ENCODE measurements at regions of chr6 and their contacts with region 1.

Region 1: GRCh38 chr6:43506667-43507471 is 3.3 kb downstream of the LRRC73 start:
- DNase-seq: peak; percentile 89
- H3K4me3 ChIP-seq: no peak overlapping the region; a peak in 1 of 4 replicates
- H3K27ac ChIP-seq: no peak overlapping the region; a peak in 1 of 4 replicates
- H3K4me1 ChIP-seq: peaks cover 0 to 26% of the 10 kb centered on the region in 2 experiments; a peak in 1 of 4 replicates
- H3K27me3 ChIP-seq: no peaks in the 10 kb centered on the region
- CTCF ChIP-seq: peak; percentile 91
- EP300 ChIP-seq: 0 out of 4 replicates have a peak, but pooled peaks of 1 of the 2 experiments have one; percentile 16
- RAD21 ChIP-seq: peak; percentile 94

Region 2: DNA sequence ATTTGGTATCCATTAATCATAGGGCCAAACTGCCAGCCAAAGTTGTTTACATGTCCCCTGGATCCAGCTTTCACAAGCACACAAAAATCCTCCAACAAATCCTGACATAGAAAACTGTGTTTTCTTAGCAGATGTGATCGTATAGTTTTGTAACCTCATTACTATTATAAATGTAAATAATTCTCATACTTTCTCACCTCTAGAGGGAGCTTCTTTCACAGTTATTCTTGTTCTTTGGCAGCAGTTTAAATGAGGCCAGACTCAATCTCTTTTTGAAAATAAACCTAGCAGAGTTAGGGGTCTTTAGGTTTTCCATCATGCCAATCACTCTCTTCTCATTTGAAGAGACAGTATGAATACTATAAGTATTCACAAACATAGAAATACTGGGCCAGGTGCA is 120.4 kb before region 1 on chr6:
- CTCF ChIA-PET with region 1: interaction called, 25 read pairs
- POLR2A ChIA-PET with region 1: no interaction called
- DNase-seq: peak; percentile 52
- H3K4me3 ChIP-seq: no peak overlapping the region
- H3K27ac ChIP-seq: no peak overlapping the region
- H3K4me1 ChIP-seq: peaks cover 0 to 2% of the 10 kb centered on the region in 2 experiments; a peak in 1 of 4 replicates
- H3K27me3 ChIP-seq: no peaks in the 10 kb centered on the region; the same call in 1 of the 2 replicates
- CTCF ChIP-seq: peak; percentile 76
- EP300 ChIP-seq: no peak
- RAD21 ChIP-seq: peak; percentile 77

Region 3: GRCh38 chr6:43421831-43422230 is 85.0 kb before region 1 on chr6:
- CTCF ChIA-PET with region 1: no interaction called
- POLR2A ChIA-PET with region 1: no interaction called
- DNase-seq: no peak
- H3K4me3 ChIP-seq: no peak overlapping the region
- H3K27ac ChIP-seq: no peak overlapping the region
- H3K4me1 ChIP-seq: no peaks in the 10 kb centered on the region
- H3K27me3 ChIP-seq: no peaks in the 10 kb centered on the region; the same call in 1 of the 2 replicates
- CTCF ChIP-seq: no peak
- EP300 ChIP-seq: no peak
- RAD21 ChIP-seq: no peak

Region 4: GRCh38 chr6:43444036-43444435 is 62.8 kb before region 1 on chr6:
- CTCF ChIA-PET with region 1: interaction called, 35 read pairs
- POLR2A ChIA-PET with region 1: interaction called, 3 read pairs
- DNase-seq: no peak
- H3K4me3 ChIP-seq: no peak overlapping the region
- H3K27ac ChIP-seq: no peak overlapping the region; a peak in 1 of 4 replicates
- H3K4me1 ChIP-seq: no peaks in the 10 kb centered on the region
- H3K27me3 ChIP-seq: no peaks in the 10 kb centered on the region
- CTCF ChIP-seq: no peak
- EP300 ChIP-seq: no peak
- RAD21 ChIP-seq: no peak

Region 5: DNA sequence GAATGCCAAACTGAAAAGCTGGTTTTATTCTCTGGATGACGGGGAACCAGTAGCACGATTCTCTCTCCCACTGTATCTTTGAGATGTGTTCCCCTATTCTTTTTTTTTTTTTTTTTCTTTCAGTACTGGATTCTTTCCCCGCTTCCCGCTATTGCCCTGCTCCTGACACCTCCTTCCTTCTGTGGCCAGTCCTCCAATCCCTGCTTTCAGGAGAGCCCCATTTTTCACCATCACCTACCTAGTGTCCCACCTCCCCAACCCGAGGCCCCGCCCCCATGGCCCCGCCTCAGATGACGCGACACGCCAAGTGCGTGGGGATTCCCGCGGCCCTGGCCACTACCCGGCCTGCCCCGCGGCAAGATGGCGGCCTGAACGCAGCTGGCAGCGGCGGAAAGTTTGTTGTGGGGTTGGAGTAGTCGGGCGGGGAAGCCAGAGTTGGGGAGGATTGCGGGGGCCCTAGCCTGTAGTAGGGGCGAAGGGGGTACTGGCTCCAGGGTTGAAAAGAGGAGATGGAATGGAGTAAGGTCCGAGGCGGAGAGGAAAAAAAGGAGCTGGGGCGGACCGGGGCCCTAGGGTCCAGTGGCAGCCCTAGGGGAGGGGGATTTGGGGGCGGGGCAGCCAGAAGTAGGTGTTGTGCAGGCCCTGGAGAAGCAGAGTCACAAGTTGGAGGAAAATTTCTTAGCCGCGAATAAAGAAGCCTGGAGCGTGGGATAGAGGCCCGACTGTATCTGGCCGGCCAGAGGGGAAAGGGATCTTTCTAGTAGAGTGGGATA is 29.4 kb before region 1 on chr6 and contains the start of gene TJAP1:
- CTCF ChIA-PET with region 1: interaction called, 23 read pairs
- POLR2A ChIA-PET with region 1: interaction called, 3 read pairs
- DNase-seq: peak; percentile 96
- H3K4me3 ChIP-seq: peak within 1 kb of the TSS; percentile 60 to 65
- H3K27ac ChIP-seq: peak within 1 kb of the TSS; percentile 40 to 65; a peak in 3 of 4 replicates
- H3K4me1 ChIP-seq: peaks cover 10 to 15% of the 10 kb centered on the region in 2 experiments; a peak in 3 of 4 replicates
- H3K27me3 ChIP-seq: no peaks in the 10 kb centered on the region
- CTCF ChIP-seq: no peak
- EP300 ChIP-seq: no peak
- RAD21 ChIP-seq: no peak
- polyA plus RNA-seq, gene TJAP1: 30.7 and 39.5 TPM in 2 replicates

Region 6: DNA sequence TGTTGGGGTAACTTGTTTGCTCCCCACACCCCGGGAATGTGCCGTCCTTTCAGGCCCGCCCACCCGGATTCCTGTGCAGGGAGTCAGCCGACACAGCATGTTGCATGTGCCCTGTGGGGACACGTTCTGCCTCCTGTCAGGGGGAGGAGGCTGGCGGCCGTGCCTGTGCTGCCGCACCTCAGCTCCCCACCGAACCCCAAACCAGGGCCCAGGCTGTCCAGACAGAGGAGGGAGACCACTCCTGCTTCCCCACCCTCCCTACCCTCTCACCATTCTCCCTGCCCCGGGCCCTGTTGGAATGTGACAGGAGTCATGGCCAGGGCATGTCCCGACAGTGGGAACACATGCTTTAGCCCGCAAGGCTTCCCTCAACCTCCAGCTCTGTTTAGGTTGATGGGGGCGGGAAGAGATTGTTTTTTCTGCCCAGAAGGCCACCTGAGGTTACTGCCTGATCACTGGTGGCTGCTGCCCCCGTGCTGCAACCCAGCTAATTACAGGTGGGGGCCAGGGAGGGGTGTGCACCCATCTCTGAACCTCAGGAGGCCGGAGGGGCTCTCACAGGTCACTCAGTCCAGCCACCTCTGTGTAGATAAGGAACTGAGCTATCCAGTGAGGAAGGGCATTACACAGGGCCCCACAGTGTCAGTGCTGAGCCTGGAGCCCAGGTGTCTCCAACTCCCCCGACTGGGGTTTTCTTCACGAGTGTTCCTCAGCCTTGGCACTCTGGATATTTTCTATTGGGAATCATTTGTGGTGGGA is 10.3 kb before region 1 on chr6:
- CTCF ChIA-PET with region 1: interaction called, 213 read pairs
- POLR2A ChIA-PET with region 1: interaction called, 8 read pairs
- DNase-seq: peak; percentile 80
- H3K4me3 ChIP-seq: no peak overlapping the region
- H3K27ac ChIP-seq: peak overlapping the region in 1 of 2 experiments; percentile 5; a peak in 1 of 4 replicates
- H3K4me1 ChIP-seq: peaks cover 14 to 43% of the 10 kb centered on the region in 2 experiments; a peak in 3 of 4 replicates
- H3K27me3 ChIP-seq: no peaks in the 10 kb centered on the region
- CTCF ChIP-seq: peak; percentile 51
- EP300 ChIP-seq: no peak
- RAD21 ChIP-seq: peak; percentile 69

Region 7: GRCh38 chr6:44058617-44059358 is 551.9 kb after region 1 on chr6:
- CTCF ChIA-PET with region 1: no interaction called
- POLR2A ChIA-PET with region 1: no interaction called
- DNase-seq: peak; percentile 81
- H3K4me3 ChIP-seq: no peak overlapping the region; a peak in 1 of 4 replicates
- H3K27ac ChIP-seq: peak overlapping the region; percentile 92 to 100
- H3K4me1 ChIP-seq: peaks cover 62 to 82% of the 10 kb centered on the region in 2 experiments
- H3K27me3 ChIP-seq: no peaks in the 10 kb centered on the region
- CTCF ChIP-seq: no peak
- EP300 ChIP-seq: peak; percentile 89 to 93
- RAD21 ChIP-seq: peak; percentile 43

Measured in SK-N-SH (cell line).